Endothelial cell of umbilical vein (primary cell): ENCODE measurements at regions of chr11 and their contacts with region 1.

Region 1: DNA sequence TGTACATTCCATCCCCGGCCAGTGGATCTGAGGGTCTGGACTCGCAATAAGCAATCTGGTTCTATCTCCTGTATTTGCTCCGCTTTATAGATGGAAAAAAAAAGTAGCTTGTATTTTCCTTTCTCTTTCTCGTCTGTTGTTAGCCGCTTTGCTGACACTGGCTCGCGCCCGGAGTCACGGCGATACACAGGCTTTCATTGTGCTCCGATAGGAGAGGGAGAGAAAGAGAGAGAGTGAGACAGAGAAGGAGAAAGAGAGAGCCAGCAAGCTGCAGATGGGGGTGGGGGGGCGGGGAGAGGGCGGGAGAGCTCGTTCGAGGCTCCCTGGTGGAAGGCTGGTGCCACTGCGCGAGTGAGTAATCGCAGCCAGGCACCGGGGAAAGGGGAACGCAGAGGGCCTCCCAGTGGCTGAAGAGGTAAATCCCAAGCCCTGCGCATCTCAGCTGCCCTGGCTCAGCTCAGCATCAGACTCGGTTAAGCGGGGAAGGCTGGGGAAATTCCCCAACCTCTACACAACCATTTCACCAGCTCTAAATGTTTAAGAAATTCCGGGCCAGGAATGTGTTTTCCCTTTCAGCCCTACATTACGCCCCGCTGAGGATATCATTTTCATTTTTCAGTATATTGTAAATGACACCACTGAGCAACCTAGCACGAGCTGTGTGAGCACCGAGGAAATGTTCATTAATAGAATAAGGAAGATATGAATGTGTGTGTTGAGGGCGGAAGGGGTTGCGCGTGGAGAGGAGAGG is at the start of gene MAML2:
- DNase-seq: peak; percentile 91
- H3K4me3 ChIP-seq: peak within 1 kb of the TSS; percentile 59 to 98 (median 94)
- H3K27ac ChIP-seq: peak within 1 kb of the TSS; percentile 88
- H3K4me1 ChIP-seq: peaks cover 30% of the 10 kb centered on the region
- H3K27me3 ChIP-seq: no peaks in the 10 kb centered on the region
- CTCF ChIP-seq: peak; percentile 76 to 96
- POLR2A ChIP-seq: no peak
- total RNA-seq, gene MAML2: 16.8 and 17.1 TPM in 2 replicates

Region 2: GRCh38 chr11:96012086-96012824 is 330.9 kb before region 1 on chr11:
- CTCF ChIA-PET with region 1: interaction called, 14 read pairs
- POLR2A ChIA-PET with region 1: no interaction called
- dilution Hi-C with region 1: no loop called
- intact Hi-C with region 1: loop called (anchors 1 kb)
- DNase-seq: peak; percentile 85
- H3K4me3 ChIP-seq: no peak overlapping the region
- H3K27ac ChIP-seq: no peak overlapping the region
- H3K4me1 ChIP-seq: peaks cover 8% of the 10 kb centered on the region
- H3K27me3 ChIP-seq: no peaks in the 10 kb centered on the region
- CTCF ChIP-seq: peak; percentile 50 to 58
- POLR2A ChIP-seq: no peak

Region 3: DNA sequence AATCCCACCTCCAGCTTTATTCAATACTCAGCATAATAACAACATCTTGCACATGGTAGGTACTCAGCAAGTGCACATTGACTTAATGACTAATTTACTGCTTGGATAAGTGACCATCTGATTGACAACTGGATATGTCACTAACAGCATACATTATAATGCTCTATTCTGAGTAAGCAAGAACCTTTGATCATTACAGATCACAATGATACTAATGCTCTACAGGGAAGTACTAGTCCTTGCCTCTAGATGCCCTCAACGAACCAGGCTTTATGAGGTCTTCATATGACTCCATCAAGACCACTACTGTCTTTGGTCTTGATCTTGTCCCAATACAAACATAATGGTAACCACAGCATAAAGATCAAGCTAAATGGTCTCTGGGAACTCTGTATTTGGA is 251.7 kb before region 1 on chr11:
- CTCF ChIA-PET with region 1: interaction called, 29 read pairs
- POLR2A ChIA-PET with region 1: no interaction called
- dilution Hi-C with region 1: no loop called
- intact Hi-C with region 1: no loop called
- DNase-seq: no peak
- H3K4me3 ChIP-seq: no peak overlapping the region
- H3K27ac ChIP-seq: no peak overlapping the region
- H3K4me1 ChIP-seq: no peaks in the 10 kb centered on the region
- H3K27me3 ChIP-seq: no peaks in the 10 kb centered on the region
- CTCF ChIP-seq: no peak
- POLR2A ChIP-seq: no peak

Region 4: GRCh38 chr11:96168623-96169022 is 174.5 kb before region 1 on chr11:
- CTCF ChIA-PET with region 1: interaction called, 33 read pairs
- POLR2A ChIA-PET with region 1: interaction called, 9 read pairs
- dilution Hi-C with region 1: no loop called
- intact Hi-C with region 1: no loop called
- DNase-seq: peak; percentile 69
- H3K4me3 ChIP-seq: no peak overlapping the region
- H3K27ac ChIP-seq: no peak overlapping the region
- H3K4me1 ChIP-seq: peaks cover 22% of the 10 kb centered on the region
- H3K27me3 ChIP-seq: no peaks in the 10 kb centered on the region
- CTCF ChIP-seq: no peak
- POLR2A ChIP-seq: no peak

Region 5: DNA sequence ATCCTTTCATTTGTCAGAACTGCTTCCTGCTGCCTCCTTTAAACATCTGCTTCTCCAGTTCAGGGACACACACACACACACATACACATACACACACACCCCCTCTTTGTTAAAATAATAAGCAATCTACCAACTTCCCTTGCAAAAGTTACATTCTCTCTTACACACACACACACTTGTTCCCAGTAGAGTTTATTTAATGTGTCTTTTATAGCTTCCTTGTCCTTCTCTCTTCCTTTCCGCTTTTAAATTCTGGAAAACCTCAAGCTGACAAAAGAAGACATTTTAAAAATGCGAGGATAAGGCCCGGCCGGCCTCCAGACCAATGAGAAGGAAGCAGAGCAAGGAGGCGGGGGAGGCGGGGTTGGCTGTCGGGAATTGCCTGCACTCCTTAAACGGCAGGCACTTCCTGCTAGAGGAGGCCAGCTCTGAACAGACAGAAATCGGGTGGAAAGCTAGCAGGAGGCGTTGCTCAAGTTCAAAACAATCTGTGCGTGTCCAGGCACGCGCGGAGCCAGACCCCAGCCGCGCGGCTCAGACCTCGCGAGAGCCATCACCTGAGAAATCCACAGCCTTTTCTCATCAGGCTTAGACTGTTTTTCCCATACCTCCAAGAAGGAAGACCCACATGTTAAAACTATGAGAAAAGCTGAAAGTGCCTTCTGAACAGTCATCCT is 100.0 kb before region 1 on chr11:
- CTCF ChIA-PET with region 1: interaction called, 40 read pairs
- POLR2A ChIA-PET with region 1: interaction called, 13 read pairs
- dilution Hi-C with region 1: no loop called
- intact Hi-C with region 1: loop called (anchors 1 kb)
- DNase-seq: peak; percentile 97
- H3K4me3 ChIP-seq: peak overlapping the region in 2 of 3 experiments; percentile 42 to 58
- H3K27ac ChIP-seq: peak overlapping the region; percentile 74
- H3K4me1 ChIP-seq: peaks cover 19% of the 10 kb centered on the region
- H3K27me3 ChIP-seq: no peaks in the 10 kb centered on the region
- CTCF ChIP-seq: no peak
- POLR2A ChIP-seq: peak; percentile 46

Region 6: GRCh38 chr11:96314326-96315020 is 28.7 kb before region 1 on chr11:
- CTCF ChIA-PET with region 1: interaction called, 156 read pairs
- POLR2A ChIA-PET with region 1: interaction called, 4 read pairs
- dilution Hi-C with region 1: no loop called
- intact Hi-C with region 1: loop called (anchors 1 kb)
- DNase-seq: peak; percentile 65
- H3K4me3 ChIP-seq: peak overlapping the region in 1 of 3 experiments; percentile 9
- H3K27ac ChIP-seq: peak overlapping the region; percentile 95
- H3K4me1 ChIP-seq: peaks cover 72% of the 10 kb centered on the region
- H3K27me3 ChIP-seq: no peaks in the 10 kb centered on the region
- CTCF ChIP-seq: no peak
- POLR2A ChIP-seq: peak; percentile 55

Region 7: DNA sequence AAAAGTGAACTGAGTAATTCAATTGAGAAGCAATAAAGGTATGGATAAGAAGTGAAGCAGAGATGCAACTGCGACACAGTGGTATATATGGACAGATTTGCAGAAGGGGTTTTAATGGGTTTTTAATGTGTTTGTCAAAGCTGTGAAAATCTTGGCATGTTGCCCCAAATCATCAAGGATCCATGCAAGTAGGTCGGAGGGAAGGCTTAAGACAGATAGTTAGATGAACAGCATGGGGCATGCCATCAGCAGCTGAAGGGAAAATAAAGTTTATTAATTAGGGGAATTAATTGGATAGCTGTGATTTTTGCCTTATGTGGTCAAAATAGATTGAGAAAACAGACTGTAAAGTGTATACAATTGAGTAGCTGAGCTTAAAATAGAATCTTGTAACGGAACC is 886.8 kb after region 1 on chr11:
- CTCF ChIA-PET with region 1: no interaction called
- POLR2A ChIA-PET with region 1: no interaction called
- dilution Hi-C with region 1: no loop called
- intact Hi-C with region 1: no loop called
- DNase-seq: no peak
- H3K4me3 ChIP-seq: no peak overlapping the region
- H3K27ac ChIP-seq: no peak overlapping the region
- H3K4me1 ChIP-seq: no peaks in the 10 kb centered on the region
- H3K27me3 ChIP-seq: no peaks in the 10 kb centered on the region
- CTCF ChIP-seq: no peak
- POLR2A ChIP-seq: no peak